B cell (primary cell): ENCODE measurements at regions of chr11 and their contacts with region 1.

Region 1: GRCh38 chr11:65418711-65419459 is 3.7 kb upstream of the NEAT1 start:
- DNase-seq: peak; percentile 94
- ATAC-seq: peak; percentile 52
- H3K4me3 ChIP-seq: peak overlapping the region; percentile 43 to 86 (median 56)
- H3K4me3 Mint-ChIP-seq: peak overlapping the region; percentile 96
- H3K27ac ChIP-seq: peak overlapping the region; percentile 91 to 97
- H3K27ac Mint-ChIP-seq: peak overlapping the region; percentile 100
- H3K4me1 ChIP-seq: peaks cover 68 to 84% of the 10 kb centered on the region in 2 donors
- H3K4me1 Mint-ChIP-seq: peaks cover 72% of the 10 kb centered on the region
- H3K27me3 ChIP-seq: no peaks in the 10 kb centered on the region
- H3K27me3 Mint-ChIP-seq: no peaks in the 10 kb centered on the region
- CTCF ChIP-seq: no peak

Region 2: GRCh38 chr11:65366340-65366773 is 52.5 kb before region 1 on chr11:
- CTCF ChIA-PET with region 1: interaction called, 9 read pairs
- POLR2A ChIA-PET with region 1: interaction called, 19 read pairs
- intact Hi-C with region 1: loop called (anchors 1 kb)
- DNase-seq: peak; percentile 73
- ATAC-seq: peak; percentile 58
- H3K4me3 ChIP-seq: no peak overlapping the region
- H3K4me3 Mint-ChIP-seq: no peak overlapping the region
- H3K27ac ChIP-seq: no peak overlapping the region
- H3K27ac Mint-ChIP-seq: no peak overlapping the region
- H3K4me1 ChIP-seq: peaks cover 17 to 33% of the 10 kb centered on the region in 2 donors
- H3K4me1 Mint-ChIP-seq: peaks cover 21% of the 10 kb centered on the region
- H3K27me3 ChIP-seq: no peaks in the 10 kb centered on the region
- H3K27me3 Mint-ChIP-seq: no peaks in the 10 kb centered on the region
- CTCF ChIP-seq: peak; percentile 81

Region 3: GRCh38 chr11:65403607-65404121 is 15.2 kb before region 1 on chr11:
- CTCF ChIA-PET with region 1: interaction called, 66 read pairs
- POLR2A ChIA-PET with region 1: interaction called, 24 read pairs
- intact Hi-C with region 1: loop called (anchors 1 kb)
- DNase-seq: peak; percentile 91
- ATAC-seq: peak; percentile 68
- H3K4me3 ChIP-seq: peak overlapping the region in 2 of 5 experiments; percentile 10 to 22
- H3K4me3 Mint-ChIP-seq: peak overlapping the region; percentile 71
- H3K27ac ChIP-seq: peak overlapping the region; percentile 81 to 86
- H3K27ac Mint-ChIP-seq: peak overlapping the region; percentile 96
- H3K4me1 ChIP-seq: peaks cover 34 to 57% of the 10 kb centered on the region in 2 donors
- H3K4me1 Mint-ChIP-seq: peaks cover 40% of the 10 kb centered on the region
- H3K27me3 ChIP-seq: no peaks in the 10 kb centered on the region
- H3K27me3 Mint-ChIP-seq: no peaks in the 10 kb centered on the region
- CTCF ChIP-seq: no peak

Region 4: GRCh38 chr11:65440831-65441499 is 22.1 kb after region 1 on chr11:
- CTCF ChIA-PET with region 1: interaction called, 12 read pairs
- POLR2A ChIA-PET with region 1: interaction called, 21 read pairs
- intact Hi-C with region 1: no loop called
- DNase-seq: peak; percentile 81
- ATAC-seq: peak; percentile 40
- H3K4me3 ChIP-seq: peak overlapping the region in 3 of 5 experiments; percentile 24 to 48 (median 29)
- H3K4me3 Mint-ChIP-seq: peak overlapping the region; percentile 89
- H3K27ac ChIP-seq: peak overlapping the region; percentile 59 to 79
- H3K27ac Mint-ChIP-seq: peak overlapping the region; percentile 98
- H3K4me1 ChIP-seq: peaks cover 63 to 69% of the 10 kb centered on the region in 2 donors
- H3K4me1 Mint-ChIP-seq: peaks cover 62% of the 10 kb centered on the region
- H3K27me3 ChIP-seq: no peaks in the 10 kb centered on the region
- H3K27me3 Mint-ChIP-seq: no peaks in the 10 kb centered on the region
- CTCF ChIP-seq: no peak

Region 5: GRCh38 chr11:65471410-65471762 is 52.5 kb after region 1 on chr11:
- CTCF ChIA-PET with region 1: interaction called, 24 read pairs
- POLR2A ChIA-PET with region 1: interaction called, 81 read pairs
- intact Hi-C with region 1: loop called (anchors 2 kb)
- DNase-seq: peak; percentile 47
- ATAC-seq: no peak
- H3K4me3 ChIP-seq: peak overlapping the region in 1 of 5 experiments; percentile 26
- H3K4me3 Mint-ChIP-seq: peak overlapping the region; percentile 19
- H3K27ac ChIP-seq: peak overlapping the region; percentile 56 to 77
- H3K27ac Mint-ChIP-seq: peak overlapping the region; percentile 97
- H3K4me1 ChIP-seq: peaks cover 16 to 30% of the 10 kb centered on the region in 2 donors
- H3K4me1 Mint-ChIP-seq: peaks cover 27% of the 10 kb centered on the region
- H3K27me3 ChIP-seq: no peaks in the 10 kb centered on the region
- H3K27me3 Mint-ChIP-seq: no peaks in the 10 kb centered on the region
- CTCF ChIP-seq: no peak

Region 6: DNA sequence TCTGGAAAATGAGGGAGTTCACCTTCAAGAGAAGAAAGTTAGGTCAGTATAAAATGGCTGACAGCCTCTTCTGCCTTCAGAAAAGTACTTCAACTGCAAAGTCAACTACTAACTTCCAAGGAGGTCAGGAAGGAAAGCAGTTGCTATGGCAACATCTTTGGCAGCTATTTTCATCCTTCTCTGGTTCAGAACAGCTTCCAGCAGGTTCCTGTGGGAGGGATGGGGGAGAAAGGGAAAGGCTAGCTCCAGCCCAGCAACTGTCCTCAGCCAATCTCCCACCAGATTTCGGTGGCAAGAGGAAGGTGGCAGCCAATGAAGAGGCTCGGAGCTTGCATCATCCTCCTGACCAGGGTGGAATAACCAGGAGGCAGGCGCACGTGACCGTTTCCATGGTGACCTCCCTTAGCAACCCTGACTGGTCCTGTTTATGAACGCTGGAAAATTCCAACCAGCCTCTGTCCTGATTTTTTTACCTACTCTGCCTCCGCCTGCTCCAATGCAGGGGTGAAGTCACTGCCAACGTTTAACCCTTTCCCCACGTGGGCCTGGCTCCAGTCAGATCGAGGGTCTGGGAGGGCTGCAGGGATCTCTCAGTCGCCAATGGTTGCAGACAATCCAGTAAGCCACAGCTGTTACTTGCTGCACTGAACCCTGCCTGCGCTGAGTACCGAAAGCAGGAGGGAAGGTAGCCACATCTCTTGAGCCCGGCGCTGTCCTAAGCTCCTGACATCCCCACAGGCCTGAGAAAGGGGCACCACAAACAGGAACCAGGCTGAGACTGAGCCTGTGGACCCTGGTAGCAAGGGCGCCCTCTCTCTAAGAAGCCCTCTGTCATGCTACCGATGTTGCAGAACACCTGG is 68.8 kb after region 1 on chr11:
- CTCF ChIA-PET with region 1: interaction called, 25 read pairs
- POLR2A ChIA-PET with region 1: interaction called, 1,159 read pairs
- intact Hi-C with region 1: no loop called
- DNase-seq: peak; percentile 66
- ATAC-seq: peak; percentile 49
- H3K4me3 ChIP-seq: no peak overlapping the region
- H3K4me3 Mint-ChIP-seq: peak overlapping the region; percentile 72
- H3K27ac ChIP-seq: no peak overlapping the region
- H3K27ac Mint-ChIP-seq: peak overlapping the region; percentile 72
- H3K4me1 ChIP-seq: peaks cover 34 to 43% of the 10 kb centered on the region in 2 donors
- H3K4me1 Mint-ChIP-seq: peaks cover 45% of the 10 kb centered on the region
- H3K27me3 ChIP-seq: no peaks in the 10 kb centered on the region
- H3K27me3 Mint-ChIP-seq: no peaks in the 10 kb centered on the region
- CTCF ChIP-seq: no peak

Region 7: DNA sequence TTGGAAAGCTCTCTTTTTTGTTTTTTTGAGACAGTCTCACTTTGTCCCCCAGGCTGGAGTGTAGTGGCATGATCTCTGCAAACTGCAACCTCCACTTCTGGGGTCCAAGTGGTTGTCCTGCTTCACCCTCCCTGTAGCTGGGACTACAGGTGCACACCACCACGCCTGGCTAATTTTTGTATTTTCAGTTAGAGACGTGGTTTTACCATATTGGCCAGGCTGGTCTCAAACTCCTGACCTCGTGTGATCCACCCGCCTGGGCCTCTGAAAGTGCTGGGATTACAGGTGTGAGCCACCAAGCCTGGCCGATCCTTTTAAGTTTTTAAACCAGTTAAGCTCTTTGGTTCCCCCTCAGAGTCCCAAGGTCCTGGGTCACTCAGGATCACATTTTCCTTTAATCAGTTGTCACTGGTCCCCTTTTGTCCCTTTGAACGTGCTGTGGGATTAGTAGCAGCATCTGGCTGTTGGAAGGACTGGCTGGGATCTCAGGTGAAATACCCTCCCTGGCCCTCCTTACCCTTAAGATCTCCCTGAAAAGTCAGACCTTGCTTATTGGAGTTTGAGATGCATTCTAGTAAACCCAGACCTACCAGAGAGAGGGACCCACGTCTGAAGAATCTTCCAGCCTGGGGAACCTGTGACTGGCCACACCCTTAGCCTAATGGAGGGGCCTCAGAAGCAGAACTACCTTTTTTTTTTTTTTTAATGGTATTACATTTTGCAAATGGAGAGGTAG is 88.1 kb after region 1 on chr11:
- CTCF ChIA-PET with region 1: interaction called, 541 read pairs
- POLR2A ChIA-PET with region 1: interaction called, 1,159 read pairs
- intact Hi-C with region 1: loop called (anchors 1 kb)
- DNase-seq: peak; percentile 79
- ATAC-seq: peak; percentile 61
- H3K4me3 ChIP-seq: peak overlapping the region in 1 of 5 experiments; percentile 99
- H3K4me3 Mint-ChIP-seq: no peak overlapping the region
- H3K27ac ChIP-seq: peak overlapping the region; percentile 65 to 99
- H3K27ac Mint-ChIP-seq: peak overlapping the region; percentile 78
- H3K4me1 ChIP-seq: peaks cover 45 to 56% of the 10 kb centered on the region in 2 donors
- H3K4me1 Mint-ChIP-seq: peaks cover 56% of the 10 kb centered on the region
- H3K27me3 ChIP-seq: no peaks in the 10 kb centered on the region
- H3K27me3 Mint-ChIP-seq: no peaks in the 10 kb centered on the region
- CTCF ChIP-seq: no peak

Region 8: DNA sequence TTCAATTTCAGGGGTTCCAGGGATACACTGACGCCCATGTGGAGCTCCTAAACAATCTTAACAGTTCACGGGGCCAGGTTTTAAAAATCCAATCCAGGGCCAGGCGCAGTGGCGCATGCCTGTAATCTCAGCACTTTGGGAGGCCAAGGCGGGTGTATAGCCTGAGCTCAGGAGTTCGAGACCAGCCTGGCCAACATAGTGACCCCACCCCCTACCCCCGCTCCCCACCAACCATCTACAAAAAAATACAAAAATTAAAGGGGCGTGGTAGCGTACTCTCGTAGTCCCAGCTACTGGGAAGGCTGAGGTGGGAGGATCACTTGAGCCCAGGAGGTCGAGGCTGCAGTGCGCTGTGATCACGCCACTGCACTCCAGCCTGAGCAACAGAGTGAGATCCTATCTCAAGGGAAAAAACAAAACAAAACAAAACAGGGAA is 541.9 kb after region 1 on chr11:
- CTCF ChIA-PET with region 1: no interaction called
- POLR2A ChIA-PET with region 1: no interaction called
- intact Hi-C with region 1: no loop called
- DNase-seq: no peak
- ATAC-seq: no peak
- H3K4me3 ChIP-seq: peak overlapping the region; percentile 74 to 90 (median 87)
- H3K4me3 Mint-ChIP-seq: peak overlapping the region; percentile 98
- H3K27ac ChIP-seq: peak overlapping the region; percentile 77 to 89
- H3K27ac Mint-ChIP-seq: peak overlapping the region; percentile 98
- H3K4me1 ChIP-seq: peaks cover 37 to 49% of the 10 kb centered on the region in 2 donors
- H3K4me1 Mint-ChIP-seq: peaks cover 53% of the 10 kb centered on the region
- H3K27me3 ChIP-seq: no peaks in the 10 kb centered on the region
- H3K27me3 Mint-ChIP-seq: no peaks in the 10 kb centered on the region
- CTCF ChIP-seq: no peak

Region 9: GRCh38 chr11:66172143-66172542 is 753.3 kb after region 1 on chr11:
- CTCF ChIA-PET with region 1: no interaction called
- POLR2A ChIA-PET with region 1: no interaction called
- intact Hi-C with region 1: no loop called
- DNase-seq: no peak
- ATAC-seq: no peak
- H3K4me3 ChIP-seq: no peak overlapping the region
- H3K4me3 Mint-ChIP-seq: no peak overlapping the region
- H3K27ac ChIP-seq: no peak overlapping the region
- H3K27ac Mint-ChIP-seq: peak overlapping the region; percentile 26
- H3K4me1 ChIP-seq: no peaks in the 10 kb centered on the region
- H3K4me1 Mint-ChIP-seq: peaks cover 16% of the 10 kb centered on the region
- H3K27me3 ChIP-seq: no peaks in the 10 kb centered on the region
- H3K27me3 Mint-ChIP-seq: no peaks in the 10 kb centered on the region
- CTCF ChIP-seq: no peak